Cardiac septum (tissue), 1 donor: ENCODE measurements at regions of chr5 and their contacts with region 1.

Region 1: DNA sequence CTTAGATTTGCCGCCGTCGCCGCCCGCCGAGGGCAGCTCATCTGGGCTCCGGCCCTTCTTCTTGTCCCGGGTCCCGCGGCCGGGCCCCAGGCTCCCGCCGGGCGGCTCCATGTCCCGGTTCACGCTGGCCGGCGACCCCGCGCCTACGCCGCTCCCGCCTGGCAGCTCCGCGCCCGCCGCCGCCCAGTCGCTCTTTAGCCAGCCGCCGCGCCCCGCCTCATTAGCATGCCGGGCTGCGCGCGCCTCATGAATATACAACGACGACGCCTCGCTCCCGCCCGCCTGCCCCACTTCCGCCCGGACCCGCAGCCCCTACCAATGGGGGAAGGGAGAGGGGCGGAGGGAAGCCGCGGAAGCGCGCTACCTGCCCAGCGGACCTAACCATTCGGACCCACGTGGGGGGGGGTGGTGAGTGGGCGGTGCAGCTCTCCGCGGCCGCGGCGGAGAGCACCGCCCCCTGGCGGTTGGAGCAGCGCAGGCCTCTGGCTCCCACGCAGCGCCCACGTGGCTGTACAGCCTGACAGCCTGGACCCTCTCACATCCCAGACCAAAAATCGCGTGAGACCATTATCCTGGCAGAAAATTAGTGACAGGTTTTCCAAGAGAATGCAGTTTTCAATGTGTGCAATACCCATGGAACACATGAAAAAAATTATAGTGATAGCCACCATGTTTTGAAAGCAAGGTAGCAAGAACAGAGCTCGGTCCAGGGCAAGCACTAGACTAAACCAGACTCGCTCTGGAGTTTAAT is at the start of gene DIAPH1:
- DNase-seq: peak; percentile 99
- total RNA-seq, gene DIAPH1: 77.7 TPM

Region 2: GRCh38 chr5:141597394-141597793 is 21.6 kb before region 1 on chr5:
- intact Hi-C with region 1: loop called (anchors 1 kb)
- DNase-seq: no peak

Region 3: DNA sequence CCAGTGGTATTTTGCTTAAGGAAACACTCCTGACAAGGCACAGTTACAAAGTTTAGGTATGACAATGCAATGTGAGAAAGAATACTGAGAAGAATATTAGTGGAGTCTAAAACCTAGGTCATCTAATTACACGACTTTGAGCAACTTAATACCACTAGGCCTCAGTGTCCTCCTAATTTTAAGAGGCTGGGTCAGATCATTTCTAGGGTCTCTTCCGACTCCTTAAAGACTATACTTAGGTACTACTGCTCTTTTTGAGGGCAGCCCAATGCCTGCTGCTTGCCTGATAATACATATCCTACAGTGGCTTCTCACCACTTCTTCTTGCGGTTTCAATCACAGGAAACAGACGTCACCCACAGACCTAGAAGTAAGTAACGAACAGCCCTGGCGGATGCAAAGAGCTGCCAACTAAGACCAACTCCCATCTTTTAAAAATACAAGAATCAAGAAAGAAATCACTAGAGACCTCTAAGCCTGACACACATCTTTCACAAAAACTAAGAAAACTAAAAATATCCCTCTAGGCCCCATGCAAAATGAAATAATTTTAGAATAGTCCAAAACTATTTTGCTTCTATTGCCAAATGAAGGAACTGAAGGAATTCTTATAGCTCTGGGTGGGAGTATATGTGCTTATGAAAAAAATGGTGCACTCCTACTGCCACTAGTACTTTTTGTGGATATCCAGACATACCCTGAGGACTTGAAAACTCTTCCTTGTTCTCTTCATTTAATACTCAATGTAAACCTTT is 13.3 kb before region 1 on chr5:
- intact Hi-C with region 1: loop called (anchors 2 kb)
- DNase-seq: peak; percentile 81